A549 (cell line): ENCODE measurements at regions of chr9 and their contacts with region 1.

Region 1: DNA sequence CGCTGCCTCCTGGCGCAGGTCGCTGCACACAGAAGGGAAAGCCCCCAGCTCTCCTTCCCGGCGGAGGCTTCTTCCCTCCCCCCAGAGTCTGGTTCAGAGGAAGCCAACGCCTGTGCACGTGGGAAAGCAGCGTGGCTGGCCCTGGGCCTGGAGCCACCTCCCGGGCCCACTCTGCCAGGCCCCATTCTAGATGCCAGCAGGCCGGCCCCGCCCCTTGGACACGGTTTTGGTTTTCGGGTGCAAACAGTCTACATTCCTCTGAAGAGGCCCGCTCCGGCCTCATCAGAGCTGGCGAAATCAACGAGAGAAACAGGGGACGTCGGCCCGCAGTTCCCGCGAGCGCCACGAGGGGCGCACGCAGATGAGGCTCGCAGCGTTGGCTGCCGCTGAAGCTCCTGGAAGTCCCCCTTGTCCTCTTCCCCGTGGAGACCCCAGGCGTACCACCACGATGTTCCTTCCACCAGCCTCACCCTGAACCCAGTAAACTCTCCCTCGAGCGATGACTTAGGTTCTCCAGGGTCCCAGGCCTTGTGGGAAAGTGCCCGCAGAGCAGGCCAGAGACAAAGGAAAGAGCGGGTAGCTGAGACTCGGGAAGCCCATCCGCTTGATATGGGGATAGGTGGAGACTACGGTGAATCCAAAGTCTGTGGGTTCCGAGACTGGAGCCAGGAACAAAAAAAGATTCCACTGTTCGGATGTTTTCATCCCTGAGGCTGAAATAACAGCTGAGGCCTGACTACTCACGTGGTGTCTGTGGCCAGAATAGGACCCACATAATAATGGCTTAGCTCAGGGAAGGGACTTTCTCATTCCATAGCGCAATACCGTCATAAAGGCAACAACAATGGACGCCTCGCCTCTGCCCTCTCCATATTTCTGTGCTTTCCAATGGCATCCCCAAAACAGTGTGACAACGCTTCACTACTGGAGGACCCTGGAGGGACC is 64.2 kb downstream of the KLF4 start:
- DNase-seq: peak; percentile 48 to 72
- ATAC-seq: peak; percentile 82 to 86
- H3K4me3 ChIP-seq: peak overlapping the region; percentile 26
- H3K27ac ChIP-seq: peak overlapping the region; percentile 78 to 89
- H3K4me1 ChIP-seq: peaks cover 5% of the 10 kb centered on the region; the same call in 2 of the 3 replicates
- CTCF ChIP-seq: peak; percentile 71
- EP300 ChIP-seq: no peak
- POLR2A ChIP-seq: no peak
- RAD21 ChIP-seq: peak; percentile 43 to 47; a peak in 4 of 5 replicates

Region 2: GRCh38 chr9:107404161-107404560 is 21.2 kb before region 1 on chr9:
- CTCF ChIA-PET with region 1: interaction called, 12 read pairs
- POLR2A ChIA-PET with region 1: no interaction called
- DNase-seq: no peak
- ATAC-seq: no peak
- H3K4me3 ChIP-seq: no peak overlapping the region
- H3K27ac ChIP-seq: no peak overlapping the region
- H3K4me1 ChIP-seq: no peaks in the 10 kb centered on the region
- CTCF ChIP-seq: no peak
- EP300 ChIP-seq: no peak
- POLR2A ChIP-seq: no peak
- RAD21 ChIP-seq: no peak

Region 3: GRCh38 chr9:107413315-107413714 is 12.1 kb before region 1 on chr9:
- CTCF ChIA-PET with region 1: interaction called, 26 read pairs
- POLR2A ChIA-PET with region 1: no interaction called
- DNase-seq: no peak
- ATAC-seq: no peak
- H3K4me3 ChIP-seq: no peak overlapping the region
- H3K27ac ChIP-seq: no peak overlapping the region
- H3K4me1 ChIP-seq: no peaks in the 10 kb centered on the region
- CTCF ChIP-seq: no peak
- EP300 ChIP-seq: no peak
- POLR2A ChIP-seq: no peak
- RAD21 ChIP-seq: no peak

Region 4: DNA sequence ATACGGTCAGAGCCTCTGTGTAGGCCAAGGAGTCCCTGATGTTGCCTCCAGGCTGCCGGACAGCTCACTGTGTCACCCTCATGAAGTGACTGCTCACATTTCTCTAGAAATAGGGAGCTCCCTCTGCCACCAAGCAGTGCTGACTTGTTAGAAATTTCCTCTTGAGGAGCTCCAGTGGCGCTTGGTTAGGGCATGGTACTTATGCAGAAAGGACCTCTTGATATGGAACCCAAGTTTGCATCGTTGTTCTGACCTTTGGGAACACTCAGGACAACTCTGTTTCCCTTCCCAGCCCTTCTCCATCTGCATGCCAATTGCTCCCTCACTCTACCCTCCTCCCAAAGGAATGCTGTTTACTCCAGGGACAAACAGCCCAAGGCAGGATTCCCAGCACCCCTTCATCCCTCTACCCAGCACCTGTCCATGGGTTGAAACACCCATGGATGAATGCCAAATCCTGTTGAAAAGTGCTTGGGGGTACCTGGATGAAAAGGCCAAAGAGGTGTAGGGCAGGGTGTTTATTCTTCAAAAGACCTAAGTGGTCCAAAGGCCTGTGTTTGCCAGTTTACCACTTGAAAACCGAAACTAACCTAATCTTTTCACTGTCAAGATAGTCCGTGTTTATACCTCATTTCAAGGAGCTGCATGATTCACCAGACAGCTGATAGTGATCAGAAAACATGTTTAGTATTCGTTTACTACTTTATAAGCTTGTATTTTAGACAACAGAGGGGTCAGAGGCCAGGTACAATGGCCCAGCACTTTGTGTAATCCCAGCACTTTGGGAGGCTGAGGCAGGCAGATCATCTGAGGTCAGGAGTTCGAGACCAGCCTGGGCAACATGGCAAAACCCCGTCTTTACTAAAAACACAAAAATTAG is 13.1 kb after region 1 on chr9:
- CTCF ChIA-PET with region 1: interaction called, 47 read pairs
- POLR2A ChIA-PET with region 1: no interaction called
- DNase-seq: no peak
- ATAC-seq: peak in 1 of 2 experiments; percentile 51; a peak in 3 of 6 replicates
- H3K4me3 ChIP-seq: no peak overlapping the region
- H3K27ac ChIP-seq: no peak overlapping the region
- H3K4me1 ChIP-seq: peaks cover 3% of the 10 kb centered on the region; the same call in 1 of the 3 replicates
- CTCF ChIP-seq: no peak
- EP300 ChIP-seq: no peak
- POLR2A ChIP-seq: no peak
- RAD21 ChIP-seq: no peak

Region 5: GRCh38 chr9:108671176-108671575 is 1245.8 kb after region 1 on chr9:
- CTCF ChIA-PET with region 1: interaction called, 11 read pairs
- POLR2A ChIA-PET with region 1: no interaction called
- DNase-seq: peak; percentile 37 to 45
- ATAC-seq: peak in 1 of 2 experiments; percentile 65; a peak in 2 of 6 replicates
- H3K4me3 ChIP-seq: no peak overlapping the region
- H3K27ac ChIP-seq: no peak overlapping the region
- H3K4me1 ChIP-seq: peaks cover 9% of the 10 kb centered on the region; the same call in 2 of the 3 replicates
- CTCF ChIP-seq: peak; percentile 56; the same call in 2 of the 3 replicates
- EP300 ChIP-seq: no peak
- POLR2A ChIP-seq: no peak
- RAD21 ChIP-seq: peak; percentile 79 to 81

Region 6: DNA sequence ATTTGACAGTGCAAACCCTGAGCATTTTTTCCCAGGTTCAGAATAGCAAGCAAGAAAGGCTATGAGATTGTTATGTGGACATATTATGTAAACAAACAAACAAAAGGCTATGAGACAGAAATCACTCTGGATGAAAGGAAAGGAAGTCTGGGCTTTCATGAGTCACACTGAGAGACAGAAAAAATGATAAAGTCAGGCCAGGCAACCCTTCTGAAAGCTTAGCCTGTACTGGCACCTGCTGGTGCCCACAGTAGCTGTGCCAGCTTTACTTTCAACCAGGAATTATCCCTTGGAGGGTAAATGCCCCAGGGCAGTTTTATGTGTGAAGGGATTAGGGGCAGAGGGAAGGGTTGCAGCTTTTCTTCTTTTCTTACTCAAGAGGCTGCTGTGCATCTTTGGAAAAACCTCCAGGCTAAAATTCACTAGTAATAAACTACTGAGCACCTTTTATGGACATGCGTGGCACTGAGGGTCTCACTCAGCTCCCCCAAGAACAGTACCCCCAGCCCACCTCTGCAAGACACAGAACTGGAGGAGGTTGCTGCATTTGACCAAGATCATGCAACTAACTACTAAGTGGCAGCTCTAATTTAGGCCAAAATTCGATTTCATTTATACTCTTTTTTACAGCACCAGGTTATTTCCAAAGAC is 1388.7 kb after region 1 on chr9:
- CTCF ChIA-PET with region 1: interaction called, 21 read pairs
- POLR2A ChIA-PET with region 1: no interaction called
- DNase-seq: peak; percentile 57 to 63
- ATAC-seq: peak; percentile 92 to 97
- H3K4me3 ChIP-seq: no peak overlapping the region
- H3K27ac ChIP-seq: no peak overlapping the region
- H3K4me1 ChIP-seq: peaks cover 9% of the 10 kb centered on the region; the same call in 2 of the 3 replicates
- CTCF ChIP-seq: peak; percentile 68
- EP300 ChIP-seq: no peak
- POLR2A ChIP-seq: no peak
- RAD21 ChIP-seq: peak; percentile 78 to 92